WTC11 (cell line): ENCODE measurements at regions of chr7 and their contacts with region 1.

Region 1: GRCh38 chr7:100407285-100408180 is 21.0 kb downstream of the ZCWPW1 start:
- DNase-seq: no peak
- ATAC-seq: peak; percentile 92
- H3K4me3 Mint-ChIP-seq: no peak overlapping the region
- H3K27ac Mint-ChIP-seq: no peak overlapping the region
- H3K4me1 Mint-ChIP-seq: no peaks in the 10 kb centered on the region
- H3K27me3 Mint-ChIP-seq: peaks cover 19% of the 10 kb centered on the region
- CTCF ChIP-seq: no peak; the same call in 1 of the 2 replicates

Region 2: GRCh38 chr7:100369105-100369504 is 38.4 kb before region 1 on chr7:
- CTCF ChIA-PET with region 1: interaction called, 11 read pairs
- POLR2A ChIA-PET with region 1: no interaction called
- DNase-seq: no peak
- ATAC-seq: no peak
- H3K4me3 Mint-ChIP-seq: no peak overlapping the region
- H3K27ac Mint-ChIP-seq: 0 out of 2 replicates have a peak overlapping the region, but pooled peaks have one; percentile 79
- H3K4me1 Mint-ChIP-seq: peaks cover 34% of the 10 kb centered on the region
- H3K27me3 Mint-ChIP-seq: no peaks in the 10 kb centered on the region
- CTCF ChIP-seq: no peak

Region 3: GRCh38 chr7:100380196-100380595 is 27.3 kb before region 1 on chr7:
- CTCF ChIA-PET with region 1: interaction called, 20 read pairs
- POLR2A ChIA-PET with region 1: no interaction called
- DNase-seq: no peak
- ATAC-seq: no peak
- H3K4me3 Mint-ChIP-seq: no peak overlapping the region
- H3K27ac Mint-ChIP-seq: no peak overlapping the region
- H3K4me1 Mint-ChIP-seq: peaks cover 7% of the 10 kb centered on the region
- H3K27me3 Mint-ChIP-seq: peaks cover 9% of the 10 kb centered on the region
- CTCF ChIP-seq: no peak

Region 4: GRCh38 chr7:100397315-100398081 is 10.0 kb before region 1 on chr7:
- CTCF ChIA-PET with region 1: interaction called, 15 read pairs
- POLR2A ChIA-PET with region 1: no interaction called
- DNase-seq: peak; percentile 18
- ATAC-seq: peak; percentile 71
- H3K4me3 Mint-ChIP-seq: no peak overlapping the region
- H3K27ac Mint-ChIP-seq: no peak overlapping the region
- H3K4me1 Mint-ChIP-seq: peaks cover 13% of the 10 kb centered on the region
- H3K27me3 Mint-ChIP-seq: peaks cover 24% of the 10 kb centered on the region
- CTCF ChIP-seq: no peak

Region 5: DNA sequence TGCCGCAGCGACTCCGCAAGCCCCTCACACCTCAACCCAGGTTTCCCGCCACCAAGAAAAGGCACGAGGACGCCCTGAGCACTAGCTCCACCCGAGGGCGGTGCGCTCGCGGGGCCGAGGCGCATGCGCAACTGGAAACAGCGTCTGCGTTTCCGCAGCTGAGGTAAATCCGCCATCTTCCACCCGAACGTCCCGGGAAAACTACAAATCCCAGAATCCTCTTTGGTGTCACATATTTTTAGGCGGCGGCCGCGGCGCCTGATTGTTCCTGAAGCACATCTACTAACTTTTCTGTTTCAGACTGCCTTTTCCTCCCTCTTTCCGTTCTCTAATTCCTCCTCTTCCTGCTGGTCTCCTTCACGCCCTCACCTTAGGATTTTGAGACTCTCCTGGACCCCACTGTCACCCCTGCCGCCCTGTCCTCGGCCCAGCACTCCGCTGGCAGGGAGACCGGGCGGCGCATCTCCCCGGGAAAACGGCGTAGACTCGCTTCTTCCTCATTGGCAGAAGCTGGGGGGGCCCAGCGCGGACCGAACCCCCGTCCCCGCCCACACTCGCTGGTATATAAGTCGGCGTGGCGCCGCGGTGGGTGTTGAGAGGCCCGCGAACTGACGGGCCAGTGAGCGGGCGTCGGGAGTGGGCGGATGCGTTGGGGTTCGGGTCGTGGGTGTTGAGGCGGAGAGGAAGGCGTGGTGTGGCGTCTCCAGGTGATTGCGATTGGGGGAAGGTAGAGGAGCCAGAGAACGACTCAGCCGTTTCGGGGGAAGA is 20.9 kb after region 1 on chr7 and contains the start of gene ZCWPW1:
- CTCF ChIA-PET with region 1: interaction called, 13 read pairs
- POLR2A ChIA-PET with region 1: interaction called, 4 read pairs
- DNase-seq: peak; percentile 95
- ATAC-seq: peak; percentile 47
- H3K4me3 Mint-ChIP-seq: peak within 1 kb of the TSS; percentile 97
- H3K27ac Mint-ChIP-seq: peak within 1 kb of the TSS; percentile 100
- H3K4me1 Mint-ChIP-seq: peaks cover 19% of the 10 kb centered on the region
- H3K27me3 Mint-ChIP-seq: peaks cover 30% of the 10 kb centered on the region
- CTCF ChIP-seq: no peak
- total RNA-seq, gene ZCWPW1: 1.4 to 1.5 TPM (median 1.4 TPM) in 3 replicates